Vagina (tissue), 2 donors: ENCODE measurements at regions of chr19 and their contacts with region 1.

Region 1: GRCh38 chr19:49896863-49897621 is at the start of gene IL4I1:
- DNase-seq: no peak
- H3K4me3 ChIP-seq: peak within 1 kb of the TSS in 1 of 2 donors; percentile 4
- H3K27ac ChIP-seq: peak within 1 kb of the TSS; percentile 87
- H3K4me1 ChIP-seq: peaks cover 26% of the 10 kb centered on the region
- H3K27me3 ChIP-seq: no peaks in the 10 kb centered on the region
- CTCF ChIP-seq: no peak
- POLR2A ChIP-seq: no peak
- total RNA-seq, gene IL4I1: not detected

Region 2: DNA sequence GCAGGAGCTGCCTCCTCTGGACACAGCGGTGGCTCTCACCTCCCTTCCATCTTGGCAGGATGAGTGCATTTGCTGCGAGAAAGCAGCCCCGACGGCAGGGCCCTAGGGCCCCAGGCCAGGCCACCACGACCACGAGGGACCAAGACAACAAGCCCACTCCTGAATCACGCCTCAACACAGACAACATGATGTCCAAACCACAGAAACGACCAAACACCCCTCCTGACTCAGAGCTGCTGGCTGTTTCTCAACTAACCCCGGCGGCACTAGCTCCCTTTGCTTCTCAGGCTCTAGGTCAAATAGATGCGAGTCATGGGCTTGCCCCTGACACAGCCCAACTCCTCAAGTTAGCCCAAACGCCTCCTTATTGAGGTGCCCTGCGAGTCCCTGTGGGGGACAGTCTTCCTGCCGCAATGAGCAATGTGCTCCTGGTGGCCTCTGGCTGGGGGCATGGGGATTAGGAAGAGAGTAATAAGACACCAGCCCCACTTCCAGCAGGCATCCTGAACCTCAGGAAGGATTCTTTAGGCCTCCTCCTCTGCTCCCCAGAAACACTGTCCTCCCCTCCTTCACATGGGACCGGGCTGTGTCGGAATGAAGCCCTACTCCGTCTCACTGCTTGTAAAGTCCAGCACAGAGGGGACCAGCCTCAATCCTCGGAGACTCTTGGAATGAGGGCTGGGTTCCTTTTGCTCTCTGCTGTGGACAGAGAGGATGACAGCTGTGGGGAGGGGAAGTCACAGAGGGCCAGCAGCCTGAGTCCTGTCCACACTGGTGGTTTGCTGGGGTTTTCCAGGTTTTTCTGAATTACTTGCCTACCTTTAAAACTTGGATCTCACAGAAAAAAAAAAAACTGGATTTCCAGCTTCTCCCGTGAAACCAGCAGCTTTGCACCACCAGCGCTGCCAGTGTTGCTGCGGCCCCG is 25.1 kb after region 1 on chr19:
- intact Hi-C with region 1: loop called (anchors 2 kb)
- DNase-seq: no peak
- H3K4me3 ChIP-seq: no peak overlapping the region
- H3K27ac ChIP-seq: no peak overlapping the region
- H3K4me1 ChIP-seq: peaks cover 28% of the 10 kb centered on the region
- H3K27me3 ChIP-seq: no peaks in the 10 kb centered on the region
- CTCF ChIP-seq: no peak
- POLR2A ChIP-seq: no peak